ENCODE measurements at regions of chr1 and their contacts with region 1.

Region 1: GRCh38 chr1:154760469-154760933 is 109.6 kb downstream of the KCNN3 start:
- DNase-seq: peak; percentile 86
- ATAC-seq: peak; percentile 98
- H3K4me3 Mint-ChIP-seq: no peak overlapping the region
- H3K27ac Mint-ChIP-seq: no peak overlapping the region
- H3K4me1 Mint-ChIP-seq: no peaks in the 10 kb centered on the region
- H3K27me3 Mint-ChIP-seq: peaks cover 27% of the 10 kb centered on the region
- CTCF ChIP-seq: no peak

Region 2: GRCh38 chr1:154669464-154670282 is 90.8 kb before region 1 on chr1:
- CTCF ChIA-PET with region 1: interaction called, 3 read pairs
- POLR2A ChIA-PET with region 1: no interaction called
- intact Hi-C with region 1: loop called (anchors 1 kb)
- DNase-seq: peak; percentile 37
- ATAC-seq: peak; percentile 98
- H3K4me3 Mint-ChIP-seq: no peak overlapping the region
- H3K27ac Mint-ChIP-seq: no peak overlapping the region
- H3K4me1 Mint-ChIP-seq: no peaks in the 10 kb centered on the region
- H3K27me3 Mint-ChIP-seq: no peaks in the 10 kb centered on the region
- CTCF ChIP-seq: no peak

Region 3: GRCh38 chr1:154878371-154879022 is 118.0 kb after region 1 on chr1:
- CTCF ChIA-PET with region 1: interaction called, 6 read pairs
- POLR2A ChIA-PET with region 1: interaction called, 4 read pairs
- intact Hi-C with region 1: loop called (anchors 2 kb)
- DNase-seq: peak; percentile 64
- ATAC-seq: peak; percentile 99
- H3K4me3 Mint-ChIP-seq: no peak overlapping the region
- H3K27ac Mint-ChIP-seq: no peak overlapping the region
- H3K4me1 Mint-ChIP-seq: no peaks in the 10 kb centered on the region
- H3K27me3 Mint-ChIP-seq: no peaks in the 10 kb centered on the region
- CTCF ChIP-seq: no peak